ENCODE measurements at regions of chr4 and their contacts with region 1.

Region 1: GRCh38 chr4:101419324-101420135 is 72.2 kb upstream of the PPP3CA start:
- DNase-seq: no peak
- H3K4me3 Mint-ChIP-seq: peak overlapping the region; percentile 65
- H3K27ac Mint-ChIP-seq: peak overlapping the region; percentile 79
- H3K4me1 Mint-ChIP-seq: peaks cover 58% of the 10 kb centered on the region
- H3K27me3 Mint-ChIP-seq: peaks cover 11% of the 10 kb centered on the region

Region 2: DNA sequence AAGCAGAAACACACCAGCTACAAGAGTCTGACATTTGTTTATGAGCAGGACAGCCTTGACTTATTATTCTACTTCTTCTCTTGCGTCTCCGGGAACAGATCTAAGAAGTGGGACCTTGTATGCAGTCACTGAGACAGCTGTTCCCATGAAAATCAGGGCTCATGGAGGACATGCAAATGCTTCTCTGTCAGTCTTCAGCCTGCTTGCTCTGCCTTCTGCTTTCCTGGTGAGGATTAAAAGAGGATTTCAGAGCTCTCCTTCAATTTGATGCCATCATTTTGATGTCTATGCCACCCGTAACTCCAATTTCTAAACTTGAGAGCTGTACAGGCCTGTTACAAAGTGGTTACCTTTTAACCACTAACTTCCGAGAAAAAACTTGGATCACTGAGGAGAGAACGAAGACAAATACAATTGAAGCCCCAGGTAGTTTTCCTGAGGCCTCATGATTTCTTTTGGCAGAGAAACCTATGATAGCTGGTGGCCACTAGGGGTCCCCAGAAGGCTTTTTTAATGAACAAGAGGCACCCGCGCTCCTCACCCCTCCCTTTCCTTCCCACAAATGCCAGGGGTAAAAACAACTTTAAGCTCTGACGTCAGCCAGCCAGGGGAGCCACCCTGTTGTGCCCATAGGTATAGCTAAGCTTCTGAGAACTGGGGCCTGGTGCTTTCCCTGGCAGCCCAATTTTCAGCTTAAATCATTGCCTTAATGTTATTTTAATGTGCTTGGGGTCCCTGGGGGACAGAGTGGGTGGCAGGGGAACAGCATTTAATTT is 1326.3 kb before region 1 on chr4:
- intact Hi-C with region 1: loop called (anchors 2 kb)
- DNase-seq: peak; percentile 75
- H3K4me3 Mint-ChIP-seq: no peak overlapping the region
- H3K27ac Mint-ChIP-seq: peak overlapping the region; percentile 81
- H3K4me1 Mint-ChIP-seq: peaks cover 56% of the 10 kb centered on the region
- H3K27me3 Mint-ChIP-seq: no peaks in the 10 kb centered on the region

Region 3: DNA sequence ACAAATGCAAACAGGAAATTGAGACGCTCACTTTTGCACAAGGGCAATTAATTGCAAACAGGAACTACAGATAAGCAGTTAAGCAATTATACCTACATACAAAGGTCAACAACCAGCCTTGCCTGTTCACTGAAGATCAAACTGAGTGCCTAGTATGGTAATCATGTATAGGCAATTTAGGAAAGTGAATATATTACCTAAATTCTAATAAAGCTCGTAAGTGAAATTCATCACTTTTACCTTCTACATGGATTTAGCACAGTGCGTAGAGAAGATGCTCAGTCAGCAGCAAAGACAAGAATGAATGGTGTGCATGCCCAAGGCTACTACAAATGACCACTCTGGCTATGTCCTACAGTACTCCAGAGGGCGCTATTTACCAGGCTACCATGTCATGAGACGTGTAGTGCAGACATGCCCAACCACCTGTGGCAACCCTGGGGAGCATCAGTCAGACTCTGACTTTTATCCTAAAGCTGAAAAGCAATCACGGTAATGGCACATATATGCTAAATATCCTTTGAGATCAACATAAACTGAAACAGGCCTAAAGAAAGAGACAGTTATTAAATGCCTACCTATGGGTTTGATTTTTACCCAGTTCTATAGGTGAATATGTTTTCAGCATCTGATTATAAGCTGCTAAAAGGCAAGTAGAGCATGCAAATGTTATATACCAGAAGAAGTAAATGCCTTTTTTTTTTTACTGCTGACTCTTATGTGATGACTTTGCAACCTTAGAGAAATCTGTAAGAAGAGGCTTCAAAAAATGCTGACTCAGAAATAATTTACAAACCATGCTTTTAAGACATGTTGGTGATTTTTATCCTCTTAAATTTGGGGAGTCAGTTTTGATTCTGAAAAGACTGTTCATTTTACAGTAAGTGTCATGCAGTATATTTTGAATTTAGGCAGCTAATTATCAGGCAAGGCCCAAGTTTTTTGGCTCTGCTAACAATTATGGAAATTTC is 250.2 kb before region 1 on chr4:
- intact Hi-C with region 1: loop called (anchors 5 kb)
- DNase-seq: peak; percentile 43
- H3K4me3 Mint-ChIP-seq: no peak overlapping the region
- H3K27ac Mint-ChIP-seq: no peak overlapping the region
- H3K4me1 Mint-ChIP-seq: no peaks in the 10 kb centered on the region
- H3K27me3 Mint-ChIP-seq: peaks cover 4% of the 10 kb centered on the region

Region 4: DNA sequence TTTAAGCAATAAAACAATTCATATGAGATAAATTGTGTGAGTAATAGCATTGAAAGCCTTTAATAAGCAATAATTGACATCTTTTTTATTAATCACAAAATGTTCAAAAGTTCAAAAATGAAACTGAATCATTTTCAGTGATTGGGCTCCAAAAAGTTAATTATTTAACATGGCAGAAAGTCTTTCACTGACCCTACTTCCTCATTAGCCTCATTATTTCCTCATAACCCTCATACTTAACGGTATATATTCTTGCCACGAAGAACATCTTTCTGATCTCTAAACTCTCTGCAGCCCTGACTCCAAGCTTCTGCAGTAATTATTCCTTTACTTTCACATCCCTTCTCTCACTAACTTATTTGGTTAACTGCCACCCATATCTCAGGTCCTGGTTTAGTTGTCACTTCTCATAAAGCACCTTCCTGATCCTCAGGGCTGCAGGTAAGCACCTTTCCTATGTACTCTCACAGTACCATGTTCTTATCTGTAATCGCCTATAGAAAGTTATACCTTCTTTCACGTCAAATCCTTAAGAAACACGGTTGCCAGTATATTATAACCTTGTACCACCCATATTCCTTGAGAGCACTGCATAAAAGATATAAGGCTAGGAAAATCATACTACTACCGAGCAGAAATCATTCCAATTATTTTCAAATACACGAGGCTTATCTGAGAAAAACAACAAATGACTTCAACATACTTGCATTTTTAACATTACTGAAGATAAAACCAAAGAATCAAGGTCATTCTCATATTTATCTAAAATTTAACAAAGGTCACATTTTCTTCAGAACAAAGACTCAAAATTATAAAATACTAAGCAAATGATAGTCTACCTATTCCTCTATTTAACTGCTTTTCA is 144.4 kb before region 1 on chr4:
- intact Hi-C with region 1: no loop called
- DNase-seq: no peak
- H3K4me3 Mint-ChIP-seq: no peak overlapping the region
- H3K27ac Mint-ChIP-seq: no peak overlapping the region
- H3K4me1 Mint-ChIP-seq: peaks cover 16% of the 10 kb centered on the region
- H3K27me3 Mint-ChIP-seq: peaks cover 5% of the 10 kb centered on the region

Region 5: DNA sequence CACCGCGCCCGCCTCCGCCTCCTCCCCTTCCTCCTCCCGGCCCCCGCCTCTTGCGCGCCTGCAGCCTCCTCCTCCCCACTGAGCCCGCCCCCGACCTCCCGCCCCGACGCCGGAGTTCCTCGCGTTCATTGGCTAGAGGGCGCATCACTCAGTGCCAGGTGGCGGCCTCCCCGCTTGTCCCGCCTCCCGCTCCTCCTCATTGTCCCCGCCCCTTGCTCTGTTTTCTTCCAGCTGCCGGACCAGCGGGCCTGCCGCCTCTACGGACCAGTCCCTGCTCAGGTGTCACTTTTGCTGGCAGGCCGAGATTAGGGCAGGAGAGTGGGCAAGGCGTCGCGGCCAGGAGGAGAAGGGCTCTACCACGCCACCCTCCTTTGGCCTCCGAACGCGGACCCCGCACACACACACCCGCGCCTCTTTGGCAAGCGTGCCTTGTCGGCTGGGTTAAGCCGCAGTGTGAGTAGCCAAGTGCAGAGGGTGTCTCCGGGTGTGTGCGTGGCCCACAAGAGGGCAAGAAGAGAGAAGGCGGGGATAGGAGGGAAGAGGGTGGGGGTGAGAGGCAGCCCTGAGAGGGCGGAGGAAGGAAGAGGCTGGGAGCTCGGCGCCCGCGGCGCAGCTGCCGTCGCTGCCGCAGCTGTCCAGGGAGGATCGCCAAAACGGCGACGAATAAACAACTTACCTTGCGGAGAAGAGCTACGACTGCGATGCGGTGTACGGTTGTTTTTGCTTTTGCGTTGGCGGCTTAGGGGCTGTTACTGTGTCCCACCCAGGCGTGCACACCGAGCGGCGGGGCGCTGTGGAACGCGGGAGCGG is 71.8 kb before region 1 on chr4:
- intact Hi-C with region 1: loop called (anchors 1 kb)
- DNase-seq: peak; percentile 95
- H3K4me3 Mint-ChIP-seq: peak overlapping the region; percentile 92
- H3K27ac Mint-ChIP-seq: peak overlapping the region; percentile 88
- H3K4me1 Mint-ChIP-seq: peaks cover 33% of the 10 kb centered on the region
- H3K27me3 Mint-ChIP-seq: peaks cover 53% of the 10 kb centered on the region

Region 6: DNA sequence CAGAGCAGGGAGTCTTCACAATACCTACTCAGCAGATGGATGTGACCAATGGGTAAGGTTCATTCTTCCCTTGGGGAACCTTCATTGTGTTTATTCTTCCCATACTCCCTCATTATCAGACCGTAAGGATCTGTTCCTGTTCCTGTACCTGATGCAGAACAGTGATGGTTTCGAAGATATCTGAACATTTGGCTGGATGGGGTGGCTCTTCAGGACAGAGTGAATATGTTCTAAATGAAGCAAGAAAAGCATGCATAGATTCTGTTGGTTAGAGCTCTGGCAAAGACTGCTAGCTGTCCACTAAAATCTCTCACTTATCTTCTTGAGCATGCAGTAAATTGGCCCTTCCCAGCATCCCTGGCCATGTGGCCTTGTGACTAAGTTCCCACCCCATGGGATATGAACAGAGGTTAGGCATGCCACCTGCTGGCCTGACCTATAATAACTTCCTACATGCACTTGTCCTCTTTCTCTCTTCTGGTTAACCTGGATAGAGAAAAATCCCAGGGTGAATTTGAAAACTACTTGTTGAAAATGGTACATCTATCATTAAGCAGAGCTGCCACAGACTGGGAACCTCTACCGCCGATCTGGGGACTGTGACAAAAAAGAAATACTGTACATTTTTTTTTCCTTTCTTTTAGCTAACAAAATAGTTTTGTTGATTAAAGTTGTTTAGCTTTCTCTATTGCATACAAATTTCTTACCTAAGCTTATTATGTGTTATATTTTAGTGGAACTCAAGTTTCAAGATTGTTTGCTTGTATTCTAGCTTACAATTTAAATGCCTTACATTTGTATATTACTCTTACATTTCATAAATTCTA is 311.0 kb after region 1 on chr4:
- intact Hi-C with region 1: loop called (anchors 1 kb)
- DNase-seq: peak; percentile 10
- H3K4me3 Mint-ChIP-seq: no peak overlapping the region
- H3K27ac Mint-ChIP-seq: no peak overlapping the region
- H3K4me1 Mint-ChIP-seq: no peaks in the 10 kb centered on the region
- H3K27me3 Mint-ChIP-seq: peaks cover 7% of the 10 kb centered on the region

Region 7: DNA sequence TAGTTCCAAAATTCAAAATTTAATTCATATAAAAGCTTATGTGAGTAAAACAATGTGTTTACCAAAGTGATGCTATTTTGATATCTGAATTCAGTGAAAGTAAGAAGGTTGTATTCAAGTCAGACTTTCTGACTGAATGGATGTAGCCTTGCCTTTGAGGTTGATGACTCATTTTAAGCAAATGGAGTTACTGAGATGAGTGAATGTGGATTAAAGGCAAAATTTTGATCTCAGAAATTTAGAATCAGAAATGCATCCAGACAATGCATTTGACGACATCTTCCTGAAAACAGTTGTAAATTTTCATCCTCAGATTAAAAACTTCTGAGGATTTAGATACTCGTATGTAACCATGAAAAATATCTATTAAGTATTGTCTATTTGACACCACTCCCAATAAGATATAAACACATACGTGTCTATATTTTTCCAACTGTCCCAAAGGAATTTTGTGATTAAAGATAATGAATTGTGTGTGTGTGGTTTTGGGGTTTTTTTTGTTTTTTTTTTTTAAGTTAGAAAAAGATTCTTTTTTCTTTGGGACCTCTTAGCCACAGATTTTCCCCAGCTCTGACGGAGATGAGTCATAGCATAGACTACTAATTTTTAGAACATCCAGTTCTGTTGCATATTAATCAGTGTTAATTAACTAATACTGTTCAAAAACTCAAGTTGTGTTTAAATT is 1116.0 kb after region 1 on chr4:
- intact Hi-C with region 1: loop called (anchors 5 kb)
- DNase-seq: no peak
- H3K4me3 Mint-ChIP-seq: peak overlapping the region; percentile 39
- H3K27ac Mint-ChIP-seq: no peak overlapping the region
- H3K4me1 Mint-ChIP-seq: peaks cover 46% of the 10 kb centered on the region
- H3K27me3 Mint-ChIP-seq: no peaks in the 10 kb centered on the region